CD8-positive, alpha-beta memory T cell (primary cell): ENCODE measurements at regions of chr14 and their contacts with region 1.

Region 1: GRCh38 chr14:70907176-70907995 is at the start of gene PCNX1:
- DNase-seq: peak; percentile 84 to 95 (median 92)
- H3K4me3 ChIP-seq: peak within 1 kb of the TSS; percentile 92
- H3K4me3 Mint-ChIP-seq: peak within 1 kb of the TSS; percentile 82 to 99 (median 96)
- H3K27ac ChIP-seq: peak within 1 kb of the TSS; percentile 66
- H3K27ac Mint-ChIP-seq: peak within 1 kb of the TSS; percentile 91 to 99 (median 98)
- H3K4me1 ChIP-seq: peaks cover 41% of the 10 kb centered on the region
- H3K4me1 Mint-ChIP-seq: peaks cover 48 to 68% (median 61%) of the 10 kb centered on the region in 3 donors
- H3K27me3 ChIP-seq: no peaks in the 10 kb centered on the region
- H3K27me3 Mint-ChIP-seq: no peaks in the 10 kb centered on the region
- total RNA-seq, gene PCNX1: 37.4 to 46.2 TPM

Region 2: GRCh38 chr14:70821584-70822529 is 85.5 kb before region 1 on chr14:
- CTCF ChIA-PET with region 1: interaction called, 63 read pairs
- POLR2A ChIA-PET with region 1: interaction called, 5 read pairs
- DNase-seq: peak; percentile 45 to 68 (median 54)
- H3K4me3 ChIP-seq: peak overlapping the region; percentile 64
- H3K4me3 Mint-ChIP-seq: peak overlapping the region; percentile 60 to 94 (median 86)
- H3K27ac ChIP-seq: no peak overlapping the region
- H3K27ac Mint-ChIP-seq: peak overlapping the region in 6 of 8 donors; percentile 12 to 95 (median 36)
- H3K4me1 ChIP-seq: peaks cover 21% of the 10 kb centered on the region
- H3K4me1 Mint-ChIP-seq: peaks cover 14 to 21% (median 20%) of the 10 kb centered on the region in 3 donors
- H3K27me3 ChIP-seq: peaks cover 6% of the 10 kb centered on the region
- H3K27me3 Mint-ChIP-seq: peaks cover 3% of the 10 kb centered on the region in 2 donors

Region 3: DNA sequence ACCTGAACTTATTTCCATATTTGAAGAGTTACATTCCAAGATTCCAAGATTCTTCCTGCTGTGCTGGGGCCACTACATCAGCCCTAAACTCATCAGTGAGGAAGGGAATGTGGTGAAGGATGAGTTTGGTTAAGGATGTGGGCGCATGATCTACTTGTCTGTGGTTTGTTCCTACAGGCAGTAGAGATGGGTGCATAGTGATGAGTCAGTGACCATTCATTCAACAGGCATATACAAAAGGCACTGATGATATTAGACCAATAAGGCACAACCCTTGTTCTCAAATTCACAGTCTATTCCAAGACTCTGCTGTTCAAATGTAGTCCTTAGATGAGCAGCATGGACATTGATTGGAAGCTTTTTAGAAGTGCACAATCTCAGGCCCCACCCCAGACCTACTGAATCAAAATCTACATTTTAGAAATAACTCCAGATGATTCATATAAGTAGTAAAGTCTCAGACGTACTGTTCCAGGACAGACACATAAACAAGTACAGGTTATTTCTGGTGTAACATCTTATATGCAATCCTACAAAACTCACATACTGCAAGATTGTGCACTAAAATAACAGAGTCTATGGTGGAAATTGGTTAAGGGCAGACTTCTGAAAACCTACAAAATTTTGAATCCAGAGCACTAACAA is 50.4 kb before region 1 on chr14:
- CTCF ChIA-PET with region 1: no interaction called
- POLR2A ChIA-PET with region 1: no interaction called
- DNase-seq: no peak
- H3K4me3 ChIP-seq: no peak overlapping the region
- H3K4me3 Mint-ChIP-seq: no peak overlapping the region
- H3K27ac ChIP-seq: no peak overlapping the region
- H3K27ac Mint-ChIP-seq: no peak overlapping the region
- H3K4me1 ChIP-seq: no peaks in the 10 kb centered on the region
- H3K4me1 Mint-ChIP-seq: peaks cover 2 to 7% (median 5%) of the 10 kb centered on the region in 3 donors
- H3K27me3 ChIP-seq: no peaks in the 10 kb centered on the region
- H3K27me3 Mint-ChIP-seq: peaks cover 0 to 1% of the 10 kb centered on the region in 2 donors

Region 4: GRCh38 chr14:70894868-70895267 is 12.5 kb before region 1 on chr14:
- CTCF ChIA-PET with region 1: interaction called, 28 read pairs
- POLR2A ChIA-PET with region 1: interaction called, 3 read pairs
- DNase-seq: no peak
- H3K4me3 ChIP-seq: no peak overlapping the region
- H3K4me3 Mint-ChIP-seq: peak overlapping the region in 2 of 7 donors; percentile 22 to 57
- H3K27ac ChIP-seq: no peak overlapping the region
- H3K27ac Mint-ChIP-seq: peak overlapping the region in 5 of 8 donors; percentile 14 to 68 (median 27)
- H3K4me1 ChIP-seq: peaks cover 30% of the 10 kb centered on the region
- H3K4me1 Mint-ChIP-seq: peaks cover 27 to 63% (median 59%) of the 10 kb centered on the region in 3 donors
- H3K27me3 ChIP-seq: no peaks in the 10 kb centered on the region
- H3K27me3 Mint-ChIP-seq: peaks cover 3 to 4% of the 10 kb centered on the region in 2 donors

Region 5: DNA sequence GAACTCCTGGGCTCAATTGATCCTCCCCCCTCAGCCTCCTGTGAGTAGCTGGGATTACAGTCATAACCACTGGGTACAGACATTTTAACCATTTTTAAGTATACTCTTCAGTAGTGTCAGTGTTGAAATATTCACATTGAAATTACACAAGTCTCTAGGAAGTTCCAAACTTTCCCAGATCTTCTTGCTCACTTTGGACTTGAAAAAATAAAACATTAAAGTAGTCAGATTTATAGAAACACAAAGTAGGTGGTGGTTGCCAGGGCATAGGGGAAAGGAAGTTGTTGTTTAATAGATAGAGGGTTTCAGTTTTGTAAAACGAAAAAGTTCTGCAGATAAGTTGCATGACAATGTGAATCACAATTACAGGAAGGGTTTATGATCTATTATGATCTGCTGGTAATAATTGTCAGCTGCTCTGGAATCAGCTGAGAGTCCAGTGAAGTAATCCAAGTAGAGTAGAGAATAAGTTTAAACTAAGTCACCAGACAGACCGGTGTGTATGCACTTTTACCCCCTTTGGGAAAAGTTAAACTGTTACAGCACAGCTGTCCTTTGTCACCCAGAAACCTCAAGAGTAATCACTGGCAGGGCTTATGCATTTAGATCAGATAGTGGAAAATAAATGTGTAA is 27.2 kb after region 1 on chr14:
- CTCF ChIA-PET with region 1: interaction called, 55 read pairs
- POLR2A ChIA-PET with region 1: interaction called, 9 read pairs
- DNase-seq: peak in 1 of 5 donors; percentile 17
- H3K4me3 ChIP-seq: peak overlapping the region; percentile 40
- H3K4me3 Mint-ChIP-seq: peak overlapping the region; percentile 47 to 79 (median 68)
- H3K27ac ChIP-seq: no peak overlapping the region
- H3K27ac Mint-ChIP-seq: peak overlapping the region; percentile 39 to 97 (median 75)
- H3K4me1 ChIP-seq: peaks cover 37% of the 10 kb centered on the region
- H3K4me1 Mint-ChIP-seq: peaks cover 84 to 94% (median 93%) of the 10 kb centered on the region in 3 donors
- H3K27me3 ChIP-seq: no peaks in the 10 kb centered on the region
- H3K27me3 Mint-ChIP-seq: no peaks in the 10 kb centered on the region

Region 6: DNA sequence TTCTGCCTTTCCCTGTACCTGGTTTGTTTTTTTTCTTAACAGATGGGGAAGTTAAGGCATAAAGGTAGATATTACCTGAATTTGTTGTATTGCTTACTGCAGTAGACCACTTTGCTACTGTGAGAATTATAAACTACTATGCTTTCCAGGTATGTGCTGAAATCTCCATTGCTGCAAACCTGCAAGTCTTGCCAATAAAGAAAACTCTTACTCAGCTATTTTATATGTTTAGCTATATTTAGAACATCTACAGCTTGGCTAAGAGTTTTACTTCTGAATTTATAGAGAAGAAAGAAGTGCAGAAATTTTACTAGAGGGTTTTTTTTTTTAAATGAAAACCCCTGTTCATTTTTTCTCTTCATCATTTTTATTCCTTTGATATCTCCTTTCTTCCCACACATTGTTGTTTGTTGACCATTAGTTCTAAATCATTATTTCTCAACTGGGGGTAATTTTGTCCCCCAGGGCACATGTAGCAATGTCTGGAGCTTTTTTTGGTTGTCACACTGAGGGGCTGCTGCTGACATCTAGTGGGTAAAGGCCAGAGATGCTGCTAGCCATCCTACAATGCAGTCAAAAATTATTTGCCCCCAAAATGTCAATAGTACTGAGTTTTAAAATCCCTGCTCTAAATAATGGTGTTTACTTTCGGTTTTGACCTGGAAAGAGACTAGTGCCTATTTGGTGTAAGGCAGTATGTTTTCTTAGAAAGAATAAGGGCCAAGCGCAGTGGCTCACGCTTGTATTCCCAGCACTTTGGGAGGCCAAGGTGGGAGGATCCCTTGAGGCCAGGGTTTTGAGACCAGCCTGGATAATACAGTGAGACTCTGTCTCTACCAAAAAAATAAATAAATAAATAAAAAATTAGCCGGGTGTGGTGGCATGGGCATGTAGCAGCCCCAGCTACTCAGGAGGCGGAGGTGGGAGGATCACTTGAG is 48.4 kb after region 1 on chr14:
- CTCF ChIA-PET with region 1: interaction called, 174 read pairs
- POLR2A ChIA-PET with region 1: interaction called, 12 read pairs
- DNase-seq: peak; percentile 23 to 73 (median 49)
- H3K4me3 ChIP-seq: no peak overlapping the region
- H3K4me3 Mint-ChIP-seq: no peak overlapping the region
- H3K27ac ChIP-seq: no peak overlapping the region
- H3K27ac Mint-ChIP-seq: peak overlapping the region in 7 of 8 donors; percentile 37 to 91 (median 71)
- H3K4me1 ChIP-seq: peaks cover 24% of the 10 kb centered on the region
- H3K4me1 Mint-ChIP-seq: peaks cover 40 to 51% (median 42%) of the 10 kb centered on the region in 3 donors
- H3K27me3 ChIP-seq: no peaks in the 10 kb centered on the region
- H3K27me3 Mint-ChIP-seq: no peaks in the 10 kb centered on the region